Heart left ventricle (tissue), 16 donors: ENCODE measurements at regions of chr5 and their contacts with region 1.

Region 1: GRCh38 chr5:103224118-103224893 is 34.3 kb upstream of the MACIR start:
- DNase-seq: peak in 2 of 5 donors; percentile 17 to 26
- ATAC-seq: peak; percentile 78 to 92 (median 86)
- H3K4me3 ChIP-seq: no peak overlapping the region
- H3K27ac ChIP-seq: no peak overlapping the region
- H3K4me1 ChIP-seq: no peaks in the 10 kb centered on the region
- H3K27me3 ChIP-seq: no peaks in the 10 kb centered on the region
- CTCF ChIP-seq: peak; percentile 42 to 72 (median 57)
- POLR2A ChIP-seq: no peak

Region 2: DNA sequence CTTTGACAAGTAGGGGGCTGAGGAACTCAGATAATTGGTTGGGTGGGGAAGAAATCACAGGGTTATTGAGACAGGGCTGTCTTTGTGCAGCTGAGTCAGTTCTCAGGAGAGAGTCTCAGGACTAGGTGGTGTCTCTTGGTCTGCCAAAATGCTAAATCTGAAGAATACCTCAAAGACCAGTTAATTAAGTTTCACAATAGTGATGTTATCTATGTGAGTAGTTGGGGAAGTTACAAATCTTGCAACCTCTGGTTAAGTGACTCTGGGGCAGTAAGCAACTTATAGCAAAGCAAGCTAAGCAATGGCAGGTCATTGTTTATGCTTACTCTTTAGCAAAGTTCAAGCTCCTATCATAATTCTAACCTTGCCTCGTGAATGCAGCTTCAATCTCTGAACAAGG is 158.0 kb before region 1 on chr5:
- intact Hi-C with region 1: no loop called
- DNase-seq: no peak
- ATAC-seq: no peak
- H3K4me3 ChIP-seq: no peak overlapping the region
- H3K27ac ChIP-seq: no peak overlapping the region
- H3K4me1 ChIP-seq: no peaks in the 10 kb centered on the region
- H3K27me3 ChIP-seq: no peaks in the 10 kb centered on the region
- CTCF ChIP-seq: no peak
- POLR2A ChIP-seq: no peak

Region 3: DNA sequence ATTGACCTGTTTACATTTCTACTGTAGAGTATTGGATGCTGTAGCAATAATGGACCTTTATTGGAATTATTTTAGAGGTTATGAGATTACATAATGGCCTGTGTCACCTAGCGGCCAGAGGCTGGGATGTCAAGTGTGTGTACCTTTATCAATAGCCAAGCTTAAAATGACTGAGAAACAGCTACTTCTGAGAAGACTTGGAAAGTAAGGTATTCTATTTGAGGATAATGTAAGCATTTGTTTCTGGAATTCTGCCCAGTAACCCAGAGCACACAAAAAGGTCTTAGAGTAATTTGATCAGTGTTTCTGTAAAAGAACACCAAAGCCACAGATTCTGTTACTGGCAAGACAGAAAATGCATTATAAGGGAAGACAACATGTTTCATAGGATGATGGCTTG is 151.0 kb after region 1 on chr5:
- intact Hi-C with region 1: loop called in 1 of 10 experiments (anchors 10 kb)
- DNase-seq: no peak
- ATAC-seq: no peak
- H3K4me3 ChIP-seq: no peak overlapping the region
- H3K27ac ChIP-seq: no peak overlapping the region
- H3K4me1 ChIP-seq: peaks cover 0 to 5% (median 0%) of the 10 kb centered on the region in 12 donors
- H3K27me3 ChIP-seq: no peaks in the 10 kb centered on the region
- CTCF ChIP-seq: no peak
- POLR2A ChIP-seq: no peak